ENCODE measurements at regions of chr20 and their contacts with region 1.

Region 1: GRCh38 chr20:49610701-49611538 is 43.0 kb upstream of the PTGIS start:
- DNase-seq: peak; percentile 95
- H3K4me3 ChIP-seq: peak overlapping the region in 5 of 8 donors; percentile 13 to 52 (median 22)
- H3K27ac ChIP-seq: peak overlapping the region in 3 of 8 donors; percentile 25 to 70 (median 53)
- H3K4me1 ChIP-seq: peaks cover 9 to 41% (median 20%) of the 10 kb centered on the region in 6 donors
- H3K27me3 ChIP-seq: peaks cover 0 to 32% (median 0%) of the 10 kb centered on the region in 7 donors
- CTCF ChIP-seq: peak; percentile 96 to 100 (median 99)
- POLR2A ChIP-seq: no peak

Region 2: GRCh38 chr20:49338061-49338460 is 272.9 kb before region 1 on chr20:
- intact Hi-C with region 1: loop called (anchors 10 kb)
- DNase-seq: no peak
- H3K4me3 ChIP-seq: no peak overlapping the region
- H3K27ac ChIP-seq: no peak overlapping the region
- H3K4me1 ChIP-seq: peaks cover 0 to 9% (median 0%) of the 10 kb centered on the region in 6 donors
- H3K27me3 ChIP-seq: peaks cover 0 to 25% (median 7%) of the 10 kb centered on the region in 7 donors
- CTCF ChIP-seq: no peak
- POLR2A ChIP-seq: no peak

Region 3: GRCh38 chr20:49541733-49542513 is 69.0 kb before region 1 on chr20:
- intact Hi-C with region 1: loop called (anchors 2 kb)
- DNase-seq: no peak
- H3K4me3 ChIP-seq: no peak overlapping the region
- H3K27ac ChIP-seq: no peak overlapping the region
- H3K4me1 ChIP-seq: no peaks in the 10 kb centered on the region
- H3K27me3 ChIP-seq: peaks cover 0 to 22% (median 0%) of the 10 kb centered on the region in 7 donors
- CTCF ChIP-seq: peak; percentile 47 to 91 (median 74)
- POLR2A ChIP-seq: no peak

Region 4: GRCh38 chr20:49747707-49748524 is 137.0 kb after region 1 on chr20:
- intact Hi-C with region 1: no loop called
- DNase-seq: peak; percentile 83
- H3K4me3 ChIP-seq: no peak overlapping the region
- H3K27ac ChIP-seq: peak overlapping the region; percentile 42 to 78 (median 67)
- H3K4me1 ChIP-seq: peaks cover 4 to 35% (median 19%) of the 10 kb centered on the region in 6 donors
- H3K27me3 ChIP-seq: no peaks in the 10 kb centered on the region
- CTCF ChIP-seq: no peak
- POLR2A ChIP-seq: no peak

Region 5: DNA sequence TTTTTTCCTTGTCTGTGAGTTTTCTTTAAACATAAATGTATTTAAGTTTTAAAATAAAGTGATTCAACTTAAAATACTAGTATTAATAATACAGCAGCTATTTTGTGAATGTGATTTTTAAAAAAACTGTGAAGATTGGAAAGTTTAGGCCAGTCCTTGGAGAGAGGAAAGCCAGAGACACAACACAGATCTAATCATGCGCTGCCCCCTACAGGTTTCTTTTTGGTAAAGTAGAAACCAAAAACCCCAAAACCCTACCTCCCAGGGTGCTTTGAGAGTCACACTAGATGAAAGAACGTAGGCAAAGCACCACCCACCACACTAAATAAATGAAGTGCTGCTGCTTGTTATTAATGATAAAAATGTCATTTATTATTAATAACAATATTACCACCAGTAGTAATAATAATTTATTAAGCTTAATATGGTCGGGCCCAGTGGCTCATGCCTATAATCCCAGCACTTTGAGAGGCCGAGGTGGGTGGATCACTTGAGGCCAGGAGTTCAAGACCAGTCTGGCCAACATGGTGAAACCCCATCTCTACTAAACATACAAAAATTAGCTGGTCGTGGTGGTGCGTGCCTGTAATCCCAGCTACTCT is 235.4 kb after region 1 on chr20:
- intact Hi-C with region 1: loop called (anchors 2 kb)
- DNase-seq: no peak
- H3K4me3 ChIP-seq: no peak overlapping the region
- H3K27ac ChIP-seq: peak overlapping the region in 5 of 8 donors; percentile 29 to 72 (median 56)
- H3K4me1 ChIP-seq: peaks cover 0 to 61% (median 18%) of the 10 kb centered on the region in 6 donors
- H3K27me3 ChIP-seq: no peaks in the 10 kb centered on the region
- CTCF ChIP-seq: peak in 10 of 11 experiments; percentile 22 to 81 (median 70)
- POLR2A ChIP-seq: no peak

Region 6: GRCh38 chr20:49936153-49937027 is 325.5 kb after region 1 on chr20 and contains the start of gene RNF114:
- intact Hi-C with region 1: loop called (anchors 5 kb)
- DNase-seq: peak; percentile 97
- H3K4me3 ChIP-seq: peak within 1 kb of the TSS; percentile 87 to 100 (median 98)
- H3K27ac ChIP-seq: peak within 1 kb of the TSS; percentile 85 to 98 (median 95)
- H3K4me1 ChIP-seq: peaks cover 27 to 68% (median 56%) of the 10 kb centered on the region in 6 donors
- H3K27me3 ChIP-seq: no peaks in the 10 kb centered on the region
- CTCF ChIP-seq: peak in 5 of 11 experiments; percentile 7 to 50 (median 20)
- POLR2A ChIP-seq: peak; percentile 60 to 93 (median 74)
- total RNA-seq, gene RNF114: 96.5 to 246 (median 113) TPM